Spleen (tissue), 13 donors: ENCODE measurements at regions of chr17 and their contacts with region 1.

Region 1: DNA sequence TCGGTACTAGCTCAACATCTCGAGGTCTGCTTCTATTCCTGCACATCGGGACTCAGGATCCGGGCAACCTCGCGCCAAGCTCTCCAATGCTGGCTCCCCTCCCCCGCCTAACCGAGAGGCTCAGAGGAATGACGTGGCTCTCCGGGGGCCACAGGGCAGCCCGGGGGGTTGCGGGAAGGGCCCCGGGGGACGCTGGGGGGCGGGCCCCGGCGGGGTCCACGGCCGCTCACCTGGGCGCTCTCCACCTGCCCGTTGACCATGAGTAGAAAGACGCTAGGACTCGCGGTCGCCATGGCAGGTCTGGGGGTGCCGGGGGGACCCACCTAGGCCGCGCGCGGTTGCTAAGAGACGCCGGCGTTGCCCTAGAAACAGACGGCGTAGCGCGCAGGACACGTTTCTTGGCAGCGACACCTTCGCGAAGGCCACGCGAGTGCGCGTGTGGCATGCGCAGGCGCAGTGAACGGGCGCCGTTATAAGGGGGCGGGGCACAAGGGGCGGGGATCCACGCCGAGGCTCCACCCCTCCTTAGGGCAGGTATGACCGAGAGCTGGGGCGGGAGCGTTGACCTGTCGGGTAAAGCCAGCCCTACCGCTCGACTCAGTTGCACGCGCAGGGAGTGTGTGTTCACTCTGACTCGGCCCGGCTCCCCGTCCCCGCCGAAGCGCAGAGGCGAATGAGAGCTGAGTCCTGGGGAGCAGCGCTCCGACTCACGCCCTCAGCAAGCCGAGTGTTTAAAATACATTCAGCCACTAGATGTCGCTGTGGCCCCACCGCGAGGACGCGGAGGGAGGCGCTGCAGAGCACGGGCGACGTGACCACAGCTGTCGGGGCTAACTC is at the start of gene B9D1:
- DNase-seq: peak; percentile 98
- H3K4me3 ChIP-seq: peak within 1 kb of the TSS; percentile 53 to 88 (median 72)
- H3K27ac ChIP-seq: peak within 1 kb of the TSS; percentile 44 to 89 (median 80)
- H3K4me1 ChIP-seq: peaks cover 6 to 19% (median 16%) of the 10 kb centered on the region in 6 donors
- H3K27me3 ChIP-seq: peaks cover 0 to 7% (median 0%) of the 10 kb centered on the region in 7 donors
- CTCF ChIP-seq: peak; percentile 94 to 99 (median 98)
- POLR2A ChIP-seq: no peak
- total RNA-seq, gene B9D1: 6.4 to 14.1 (median 7.3) TPM

Region 2: GRCh38 chr17:19295473-19296135 is 66.9 kb before region 1 on chr17:
- intact Hi-C with region 1: no loop called
- DNase-seq: peak; percentile 63
- H3K4me3 ChIP-seq: no peak overlapping the region
- H3K27ac ChIP-seq: no peak overlapping the region
- H3K4me1 ChIP-seq: peaks cover 0 to 33% (median 6%) of the 10 kb centered on the region in 6 donors
- H3K27me3 ChIP-seq: peaks cover 0 to 11% (median 0%) of the 10 kb centered on the region in 7 donors
- CTCF ChIP-seq: no peak
- POLR2A ChIP-seq: no peak

Region 3: DNA sequence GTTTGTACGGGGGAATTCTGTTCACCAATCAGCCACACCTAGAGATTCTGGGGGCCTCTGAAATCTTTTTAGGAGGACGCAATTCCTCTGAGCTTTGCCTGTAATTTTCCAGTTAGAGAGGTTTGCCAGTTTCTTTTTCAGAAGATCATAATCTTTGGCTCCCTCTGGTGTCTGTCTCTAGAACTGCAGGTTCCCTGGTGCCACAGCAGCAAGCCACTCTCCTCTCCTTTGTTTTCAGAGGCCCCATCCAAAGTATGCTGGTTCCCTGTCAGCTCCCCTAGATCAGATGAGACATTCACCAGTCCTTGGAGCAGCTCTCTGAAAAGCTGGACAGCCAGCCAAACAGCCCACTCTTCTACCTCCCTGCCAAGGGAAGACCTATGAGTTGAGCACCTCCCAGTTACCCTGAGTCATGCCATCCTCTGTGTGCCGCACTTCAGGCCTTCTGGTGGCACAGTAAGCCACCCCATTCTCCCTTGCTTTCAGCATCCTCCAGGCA is 84.6 kb after region 1 on chr17:
- intact Hi-C with region 1: loop called (anchors 2 kb)
- DNase-seq: no peak
- H3K4me3 ChIP-seq: no peak overlapping the region
- H3K27ac ChIP-seq: peak overlapping the region in 4 of 8 donors; percentile 24 to 53 (median 40)
- H3K4me1 ChIP-seq: peaks cover 5 to 20% (median 15%) of the 10 kb centered on the region in 6 donors
- H3K27me3 ChIP-seq: no peaks in the 10 kb centered on the region
- CTCF ChIP-seq: peak; percentile 92 to 99 (median 98)
- POLR2A ChIP-seq: no peak